ENCODE measurements at regions of chr5 and their contacts with region 1.

Region 1: GRCh38 chr5:31574772-31575171 is 42.7 kb downstream of the C5orf22 start:
- DNase-seq: no peak
- H3K4me3 ChIP-seq: no peak overlapping the region
- H3K27ac ChIP-seq: no peak overlapping the region
- H3K4me1 ChIP-seq: no peaks in the 10 kb centered on the region
- CTCF ChIP-seq: no peak

Region 2: GRCh38 chr5:31531888-31532710 is 42.7 kb before region 1 on chr5 and contains the starts of genes C5orf22 and DROSHA:
- CTCF ChIA-PET with region 1: no interaction called
- POLR2A ChIA-PET with region 1: no interaction called
- intact Hi-C with region 1: no loop called
- DNase-seq: peak; percentile 96
- H3K4me3 ChIP-seq: peak within 1 kb of the TSS; percentile 78
- H3K27ac ChIP-seq: peak within 1 kb of the TSS; percentile 74
- H3K4me1 ChIP-seq: peaks cover 34% of the 10 kb centered on the region
- CTCF ChIP-seq: peak; percentile 52
- total RNA-seq, gene C5orf22: 20.5 and 21.6 TPM in 2 replicates
- total RNA-seq, gene DROSHA: 56.3 and 97.9 TPM in 2 replicates

Region 3: DNA sequence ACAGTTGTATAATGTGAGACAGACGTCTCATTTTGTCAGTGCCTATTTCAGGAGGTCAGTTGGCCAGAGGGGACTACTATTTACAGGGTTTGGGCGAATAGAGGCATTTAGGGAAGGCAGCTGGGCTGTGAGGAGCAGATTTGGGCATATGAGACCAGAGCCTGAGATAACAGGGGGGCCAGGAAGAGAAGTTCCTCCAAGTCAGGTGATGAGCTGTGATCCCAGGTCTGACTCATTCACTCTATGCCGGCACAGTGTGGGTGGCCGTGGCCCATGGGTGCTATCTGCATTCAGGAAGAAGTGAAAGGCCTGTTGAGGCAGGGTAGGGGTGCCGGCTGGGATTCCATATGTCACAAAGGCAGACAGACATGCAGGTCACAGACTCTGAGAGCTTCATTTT is 207.0 kb after region 1 on chr5:
- CTCF ChIA-PET with region 1: interaction called, 15 read pairs
- POLR2A ChIA-PET with region 1: no interaction called
- intact Hi-C with region 1: no loop called
- DNase-seq: no peak
- H3K4me3 ChIP-seq: no peak overlapping the region
- H3K27ac ChIP-seq: no peak overlapping the region
- H3K4me1 ChIP-seq: no peaks in the 10 kb centered on the region
- CTCF ChIP-seq: no peak